ENCODE measurements at regions of chr11 and their contacts with region 1.

Region 1: DNA sequence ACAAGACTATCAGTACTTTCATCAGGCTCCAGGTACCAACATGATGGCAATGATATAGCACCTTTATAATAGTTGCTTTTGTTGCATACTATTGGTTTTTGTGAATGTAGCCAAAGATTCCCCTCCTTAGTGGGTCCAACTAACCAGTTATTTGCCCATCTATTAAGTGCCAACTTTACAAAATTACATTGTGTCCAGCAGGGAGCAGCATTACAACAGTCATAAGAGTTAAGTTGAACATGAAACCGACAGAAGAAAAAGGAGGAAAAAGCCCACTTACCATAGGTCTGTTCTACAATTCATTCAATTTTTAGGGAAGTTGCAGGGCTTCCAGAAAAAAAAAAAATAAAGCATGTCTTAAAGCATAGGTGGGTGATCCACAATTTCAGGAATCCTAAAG is 21.6 kb downstream of the IMMP1L start:
- DNase-seq: no peak
- ATAC-seq: peak; percentile 74
- H3K4me3 ChIP-seq: no peak overlapping the region
- H3K27ac ChIP-seq: no peak overlapping the region
- H3K4me1 ChIP-seq: no peaks in the 10 kb centered on the region
- H3K27me3 ChIP-seq: no peaks in the 10 kb centered on the region
- CTCF ChIP-seq: peak; percentile 2 to 47 (median 21); a peak in 2 of 6 replicates
- EP300 ChIP-seq: no peak
- POLR2A ChIP-seq: no peak
- RAD21 ChIP-seq: peak; percentile 57

Region 2: GRCh38 chr11:31810779-31811647 is 323.2 kb after region 1 on chr11 and contains the start of gene PAX6:
- CTCF ChIA-PET with region 1: no interaction called
- POLR2A ChIA-PET with region 1: no interaction called
- RAD21 ChIA-PET with region 1: no interaction called
- SMC1A ChIA-PET with region 1: no interaction called
- in situ Hi-C with region 1: no loop called
- intact Hi-C with region 1: loop called (anchors 5 kb)
- DNase-seq: peak; percentile 5
- ATAC-seq: peak; percentile 59
- H3K4me3 ChIP-seq: peak within 1 kb of the TSS; percentile 63
- H3K27ac ChIP-seq: no peak within 1 kb of the TSS
- H3K4me1 ChIP-seq: peaks cover 12% of the 10 kb centered on the region; the same call in 1 of the 2 replicates
- H3K27me3 ChIP-seq: peaks cover 30 to 63% of the 10 kb centered on the region in 2 experiments
- CTCF ChIP-seq: no peak
- EP300 ChIP-seq: no peak
- POLR2A ChIP-seq: 0 out of 2 replicates have a peak, but pooled peaks have one; percentile 29
- RAD21 ChIP-seq: no peak
- polyA plus RNA-seq, gene PAX6: 0.10 TPM in 1 of 2 experiments, not detected in the other

Measured in GM12878 (cell line).